Dendritic cell treated with granulocyte-macrophage colony-stimulating factor and Interleukin-4, amounts not matched to agents 40 ng/mL and 50 ng/mL, for 4 days (primary cell): ENCODE measurements at regions of chr13 and their contacts with region 1.

Region 1: GRCh38 chr13:102555917-102556553 is 40.8 kb upstream of the TPP2 start:
- H3K4me3 Mint-ChIP-seq: no peak overlapping the region
- H3K27ac Mint-ChIP-seq: no peak overlapping the region
- H3K4me1 Mint-ChIP-seq: peaks cover 5% of the 10 kb centered on the region
- H3K27me3 Mint-ChIP-seq: no peaks in the 10 kb centered on the region

Region 2: GRCh38 chr13:101144808-101145419 is 1411.1 kb before region 1 on chr13:
- intact Hi-C with region 1: loop called (anchors 5 kb)
- H3K4me3 Mint-ChIP-seq: no peak overlapping the region
- H3K27ac Mint-ChIP-seq: no peak overlapping the region
- H3K4me1 Mint-ChIP-seq: no peaks in the 10 kb centered on the region
- H3K27me3 Mint-ChIP-seq: peaks cover 3% of the 10 kb centered on the region

Region 3: DNA sequence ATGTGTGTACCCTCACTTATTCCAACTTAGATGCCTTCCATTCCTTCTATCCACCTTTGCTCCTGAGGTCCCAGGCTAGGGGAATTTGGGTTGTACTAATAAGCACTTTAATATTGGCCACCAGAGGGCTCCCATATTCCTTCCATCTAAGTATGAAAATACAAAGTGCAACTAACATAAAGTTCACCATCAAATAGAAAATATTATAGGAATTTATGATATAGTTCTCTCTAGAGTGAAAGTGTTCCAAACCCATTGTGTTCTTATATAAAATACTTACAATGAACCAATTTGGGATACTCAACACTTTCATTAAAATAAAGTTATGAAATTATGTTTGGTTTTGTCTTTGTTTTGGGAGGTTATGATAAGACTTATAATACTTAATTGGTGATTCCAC is 1041.2 kb before region 1 on chr13:
- intact Hi-C with region 1: loop called (anchors 5 kb)
- H3K4me3 Mint-ChIP-seq: no peak overlapping the region
- H3K27ac Mint-ChIP-seq: no peak overlapping the region
- H3K4me1 Mint-ChIP-seq: no peaks in the 10 kb centered on the region
- H3K27me3 Mint-ChIP-seq: no peaks in the 10 kb centered on the region

Region 4: DNA sequence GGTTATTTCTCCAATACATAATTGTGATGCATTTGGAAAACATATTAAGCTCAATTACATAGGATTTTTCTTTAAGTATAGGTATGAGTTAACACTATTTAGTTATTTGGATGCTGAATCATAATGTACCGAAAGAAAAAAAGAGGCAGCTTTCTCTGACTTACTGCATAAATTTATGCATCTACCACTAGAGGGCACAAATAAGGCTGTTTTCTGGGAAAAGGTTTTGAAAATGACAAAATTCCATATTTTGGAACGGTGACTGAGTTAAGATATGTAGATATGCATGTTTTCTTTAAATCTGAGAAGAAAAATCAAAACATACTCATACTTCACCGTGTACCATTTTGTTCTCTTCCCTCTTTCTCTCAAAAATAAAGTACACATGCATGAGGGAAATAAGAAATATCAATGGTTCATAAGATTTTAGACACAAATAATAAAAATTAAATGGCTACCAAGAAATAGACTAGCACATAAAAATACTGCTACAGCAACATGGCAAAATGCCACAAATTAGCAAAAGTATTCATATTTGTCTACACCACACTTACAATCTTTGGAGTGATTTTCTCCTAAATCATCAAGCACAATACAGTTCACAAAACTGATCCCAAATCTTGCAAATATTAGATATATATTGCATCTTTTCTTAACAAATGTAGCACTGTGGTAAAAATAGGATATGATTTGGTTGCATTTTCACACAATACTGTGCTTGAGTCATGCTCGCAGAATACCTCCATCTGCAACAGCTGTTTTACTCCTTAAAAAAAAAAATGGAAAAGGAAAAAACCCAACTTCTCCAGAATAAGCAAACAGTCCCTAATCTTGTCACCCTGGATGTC is 414.2 kb before region 1 on chr13:
- intact Hi-C with region 1: loop called (anchors 5 kb)
- H3K4me3 Mint-ChIP-seq: no peak overlapping the region
- H3K27ac Mint-ChIP-seq: no peak overlapping the region
- H3K4me1 Mint-ChIP-seq: no peaks in the 10 kb centered on the region
- H3K27me3 Mint-ChIP-seq: no peaks in the 10 kb centered on the region

Region 5: DNA sequence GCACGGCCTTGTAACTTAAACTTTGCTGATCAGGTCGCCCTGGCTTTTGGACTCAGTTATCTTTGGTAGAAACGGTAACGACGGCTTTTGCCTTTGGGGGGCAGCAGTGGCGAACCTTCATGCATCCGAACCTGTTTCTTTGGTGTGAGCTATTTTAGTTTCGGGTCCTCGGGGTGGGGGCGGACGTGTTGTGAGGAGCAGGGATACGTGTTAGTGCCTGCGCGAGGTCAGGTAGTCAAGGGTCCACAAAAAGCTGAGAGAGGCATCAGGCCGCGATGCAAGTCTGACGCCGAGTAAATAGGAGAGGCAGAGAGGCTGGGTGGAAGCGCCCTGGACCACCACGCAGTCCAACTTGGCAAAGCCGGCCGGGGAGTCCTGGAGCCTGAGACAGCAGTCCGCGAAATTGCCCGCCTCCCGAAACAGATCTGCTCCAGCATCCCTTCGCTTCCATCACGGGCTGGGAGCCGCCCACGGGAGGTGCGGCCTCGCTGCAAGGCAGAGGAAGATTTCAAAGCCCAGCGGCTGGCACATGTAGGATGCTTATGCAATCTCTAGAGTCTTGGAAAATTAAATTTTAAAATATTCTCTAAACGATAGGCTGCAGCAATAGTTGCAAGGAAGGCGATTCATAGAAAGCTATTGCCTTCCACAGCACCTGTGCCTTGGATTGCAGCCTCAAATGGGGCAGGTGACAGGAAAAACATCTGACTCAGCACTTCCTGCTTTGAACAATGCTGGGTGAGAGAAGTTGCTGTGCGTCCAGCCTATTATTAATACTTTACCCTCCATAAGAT is 36.1 kb after region 1 on chr13:
- intact Hi-C with region 1: no loop called
- H3K4me3 Mint-ChIP-seq: peak overlapping the region; percentile 93
- H3K27ac Mint-ChIP-seq: peak overlapping the region; percentile 85
- H3K4me1 Mint-ChIP-seq: peaks cover 13% of the 10 kb centered on the region
- H3K27me3 Mint-ChIP-seq: no peaks in the 10 kb centered on the region